Ascending aorta (tissue), 2 donors: ENCODE measurements at regions of chr9 and their contacts with region 1.

Region 1: GRCh38 chr9:87725900-87726709 is at the start of gene CTSL:
- DNase-seq: peak; percentile 75 to 96
- H3K4me3 ChIP-seq: peak within 1 kb of the TSS; percentile 73 to 76
- H3K27ac ChIP-seq: peak within 1 kb of the TSS; percentile 95 to 98
- H3K4me1 ChIP-seq: peaks cover 6 to 10% of the 10 kb centered on the region in 2 donors
- H3K27me3 ChIP-seq: no peaks in the 10 kb centered on the region
- CTCF ChIP-seq: peak in 1 of 3 experiments; percentile 25
- total RNA-seq, gene CTSL: 97.8 TPM

Region 2: DNA sequence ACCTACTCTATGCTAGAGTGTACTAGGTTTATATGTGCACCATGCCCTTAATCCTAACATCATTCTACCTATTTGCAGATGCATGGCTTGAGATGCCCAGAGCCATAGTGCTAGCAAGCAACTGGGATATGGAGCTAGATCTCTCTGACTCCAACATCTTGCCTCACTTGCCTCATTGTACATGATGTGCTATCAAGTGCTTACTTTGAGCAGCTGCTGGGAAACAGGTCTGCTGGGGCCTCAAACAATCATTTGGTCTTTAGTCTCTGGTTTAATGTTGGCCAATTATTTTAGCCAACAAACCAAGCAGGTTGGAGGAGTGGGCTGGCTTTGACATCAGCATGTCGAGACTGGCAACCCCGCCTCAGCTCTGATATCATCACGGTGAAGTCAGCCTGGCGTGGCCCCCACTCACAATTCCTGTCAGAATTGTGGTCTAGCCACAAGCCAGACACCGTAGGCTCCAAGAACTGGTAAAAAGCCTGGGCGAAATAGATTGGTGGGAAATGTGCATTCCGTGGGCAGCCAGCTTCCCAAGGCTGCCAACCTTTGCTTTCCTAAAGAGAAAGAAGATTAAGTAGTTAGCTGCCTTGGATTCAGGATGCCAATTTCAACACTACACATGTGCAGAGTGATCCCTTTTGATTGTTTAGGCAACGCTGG is 757.7 kb before region 1 on chr9:
- intact Hi-C with region 1: loop called (anchors 10 kb)
- DNase-seq: no peak
- H3K4me3 ChIP-seq: no peak overlapping the region
- H3K27ac ChIP-seq: peak overlapping the region in 1 of 2 donors; percentile 19
- H3K4me1 ChIP-seq: peaks cover 6 to 13% of the 10 kb centered on the region in 2 donors
- H3K27me3 ChIP-seq: no peaks in the 10 kb centered on the region
- CTCF ChIP-seq: no peak

Region 3: GRCh38 chr9:87547667-87548066 is 178.4 kb before region 1 on chr9:
- intact Hi-C with region 1: no loop called
- DNase-seq: no peak
- H3K4me3 ChIP-seq: no peak overlapping the region
- H3K27ac ChIP-seq: no peak overlapping the region
- H3K4me1 ChIP-seq: no peaks in the 10 kb centered on the region
- H3K27me3 ChIP-seq: no peaks in the 10 kb centered on the region
- CTCF ChIP-seq: no peak

Region 4: GRCh38 chr9:87742813-87743428 is 16.8 kb after region 1 on chr9:
- intact Hi-C with region 1: no loop called
- DNase-seq: no peak
- H3K4me3 ChIP-seq: no peak overlapping the region
- H3K27ac ChIP-seq: no peak overlapping the region
- H3K4me1 ChIP-seq: no peaks in the 10 kb centered on the region
- H3K27me3 ChIP-seq: no peaks in the 10 kb centered on the region
- CTCF ChIP-seq: no peak

Region 5: GRCh38 chr9:87973730-87974292 is 247.7 kb after region 1 on chr9:
- intact Hi-C with region 1: loop called (anchors 10 kb)
- DNase-seq: no peak
- H3K4me3 ChIP-seq: peak overlapping the region; percentile 72 to 75
- H3K27ac ChIP-seq: peak overlapping the region in 1 of 2 donors; percentile 6
- H3K4me1 ChIP-seq: peaks cover 0 to 18% of the 10 kb centered on the region in 2 donors
- H3K27me3 ChIP-seq: no peaks in the 10 kb centered on the region
- CTCF ChIP-seq: no peak

Region 6: DNA sequence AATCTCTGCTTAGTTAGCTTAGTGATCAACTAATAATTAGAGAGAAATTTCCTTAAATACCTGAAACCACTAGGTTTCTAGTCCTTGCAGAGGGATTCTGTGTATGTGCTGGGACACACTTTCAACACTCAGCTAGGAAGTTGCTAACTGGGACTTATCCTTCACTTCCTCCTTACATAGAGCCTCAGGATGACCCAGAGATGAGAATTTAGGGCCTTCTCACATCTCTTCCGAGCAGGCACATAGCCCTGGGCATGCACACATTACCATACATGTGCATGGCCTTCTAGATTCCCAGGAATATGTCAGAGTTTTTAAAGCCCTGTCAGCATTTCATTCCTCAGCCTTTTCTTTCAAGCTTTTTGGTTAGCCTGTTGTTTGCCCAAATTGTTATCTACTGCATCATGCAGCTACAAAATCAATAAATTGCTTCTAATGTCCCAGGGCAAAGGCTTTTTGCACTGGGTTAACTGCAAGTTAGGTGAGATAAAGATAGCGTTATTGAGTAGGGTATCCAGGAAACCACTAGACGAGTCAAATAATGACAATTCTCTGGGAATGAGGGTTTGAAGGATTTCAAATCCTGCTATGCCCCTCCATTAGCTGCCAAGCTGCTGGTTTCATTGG is 270.2 kb after region 1 on chr9:
- intact Hi-C with region 1: no loop called
- DNase-seq: no peak
- H3K4me3 ChIP-seq: no peak overlapping the region
- H3K27ac ChIP-seq: no peak overlapping the region
- H3K4me1 ChIP-seq: no peaks in the 10 kb centered on the region
- H3K27me3 ChIP-seq: no peaks in the 10 kb centered on the region
- CTCF ChIP-seq: no peak

Region 7: GRCh38 chr9:88388172-88388885 is 662.2 kb after region 1 on chr9 and contains the start of gene SPIN1:
- intact Hi-C with region 1: loop called (anchors 5 kb)
- DNase-seq: peak in 1 of 2 donors; percentile 83
- H3K4me3 ChIP-seq: peak within 1 kb of the TSS; percentile 99 to 100
- H3K27ac ChIP-seq: peak within 1 kb of the TSS; percentile 88 to 95
- H3K4me1 ChIP-seq: peaks cover 0 to 11% of the 10 kb centered on the region in 2 donors
- H3K27me3 ChIP-seq: no peaks in the 10 kb centered on the region
- CTCF ChIP-seq: peak in 1 of 3 experiments; percentile 78
- total RNA-seq, gene SPIN1: 11.6 TPM

Region 8: GRCh38 chr9:88991066-88992034 is 1265.2 kb after region 1 on chr9 and contains the start of gene S1PR3:
- intact Hi-C with region 1: loop called (anchors 10 kb)
- DNase-seq: peak in 1 of 2 donors; percentile 86
- H3K4me3 ChIP-seq: peak within 1 kb of the TSS; percentile 77 to 89
- H3K27ac ChIP-seq: peak within 1 kb of the TSS; percentile 80 to 90
- H3K4me1 ChIP-seq: peaks cover 5 to 10% of the 10 kb centered on the region in 2 donors
- H3K27me3 ChIP-seq: no peaks in the 10 kb centered on the region
- CTCF ChIP-seq: peak in 1 of 3 experiments; percentile 5
- total RNA-seq, gene S1PR3: 59.3 TPM